ENCODE measurements at regions of chr17 and their contacts with region 1.

Region 1: DNA sequence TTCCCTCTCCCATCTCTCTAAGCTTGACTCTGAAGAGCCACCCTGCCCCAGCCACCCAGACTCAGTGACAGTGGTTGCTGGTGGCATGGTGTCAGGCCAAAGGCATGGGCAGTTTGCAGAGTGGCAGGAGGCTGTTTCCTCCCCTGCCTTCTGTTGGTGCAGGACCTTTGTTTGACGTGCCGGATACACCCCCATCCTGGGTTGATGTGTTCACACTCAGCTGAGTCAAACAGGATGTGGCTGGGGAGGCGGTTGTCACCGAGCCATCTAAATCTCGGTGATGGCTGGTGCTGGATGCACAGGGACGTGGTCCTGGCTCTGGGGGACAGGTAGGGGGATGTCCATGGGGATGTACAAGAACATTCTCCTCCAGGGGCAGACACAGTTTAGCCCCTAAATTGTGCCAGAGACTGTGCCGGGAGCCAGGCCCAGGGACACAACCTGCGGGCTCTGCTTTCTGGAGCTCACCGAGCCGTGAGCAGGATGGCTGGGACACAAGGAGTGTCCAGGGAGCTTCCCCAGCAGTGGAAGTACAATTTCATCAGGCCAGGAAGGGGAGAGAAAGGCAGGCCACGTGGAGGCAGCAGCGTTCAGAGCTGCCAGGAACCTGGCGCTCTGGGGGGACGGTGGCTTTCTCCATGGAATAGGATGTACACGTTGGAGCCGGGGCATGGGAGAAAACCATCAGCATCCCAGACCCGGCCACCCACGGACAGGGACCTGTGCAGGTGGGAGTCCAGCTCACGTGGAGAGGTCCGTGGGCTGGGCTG is 264.2 kb downstream of the SEC14L1 start:
- DNase-seq: no peak
- ATAC-seq: no peak
- H3K4me3 ChIP-seq: no peak overlapping the region
- H3K27ac ChIP-seq: no peak overlapping the region
- H3K4me1 ChIP-seq: peaks cover 0 to 37% of the 10 kb centered on the region in 2 experiments; a peak in 2 of 5 replicates
- H3K27me3 ChIP-seq: no peaks in the 10 kb centered on the region
- CTCF ChIP-seq: no peak
- EP300 ChIP-seq: no peak
- POLR2A ChIP-seq: no peak
- RAD21 ChIP-seq: no peak

Region 2: DNA sequence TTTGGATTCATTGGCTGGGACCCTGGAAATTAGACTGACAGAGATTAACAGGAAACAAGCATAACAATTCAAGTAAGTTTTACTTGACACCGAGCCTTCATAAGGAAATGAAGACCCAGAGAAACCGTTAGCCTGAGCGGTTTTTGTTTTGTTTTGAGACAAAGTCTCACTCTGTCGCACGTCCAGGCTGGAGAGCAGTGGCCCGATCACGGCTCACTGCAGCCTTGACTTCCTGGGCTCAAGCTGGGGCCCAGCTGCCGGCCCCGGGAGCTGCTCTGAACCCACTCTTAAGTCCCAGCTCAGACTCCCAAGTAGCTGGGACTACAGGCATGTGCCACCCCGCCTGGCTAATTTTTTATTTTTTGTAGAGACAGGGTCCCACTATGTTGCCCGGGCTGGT is 57.1 kb after region 1 on chr17:
- CTCF ChIA-PET with region 1: no interaction called
- POLR2A ChIA-PET with region 1: no interaction called
- in situ Hi-C with region 1: no loop called
- intact Hi-C with region 1: no loop called
- DNase-seq: no peak
- ATAC-seq: no peak
- H3K4me3 ChIP-seq: no peak overlapping the region
- H3K27ac ChIP-seq: no peak overlapping the region
- H3K4me1 ChIP-seq: peaks cover 25 to 56% of the 10 kb centered on the region in 2 experiments
- H3K27me3 ChIP-seq: no peaks in the 10 kb centered on the region
- CTCF ChIP-seq: no peak
- EP300 ChIP-seq: no peak
- POLR2A ChIP-seq: no peak
- RAD21 ChIP-seq: no peak

Region 3: DNA sequence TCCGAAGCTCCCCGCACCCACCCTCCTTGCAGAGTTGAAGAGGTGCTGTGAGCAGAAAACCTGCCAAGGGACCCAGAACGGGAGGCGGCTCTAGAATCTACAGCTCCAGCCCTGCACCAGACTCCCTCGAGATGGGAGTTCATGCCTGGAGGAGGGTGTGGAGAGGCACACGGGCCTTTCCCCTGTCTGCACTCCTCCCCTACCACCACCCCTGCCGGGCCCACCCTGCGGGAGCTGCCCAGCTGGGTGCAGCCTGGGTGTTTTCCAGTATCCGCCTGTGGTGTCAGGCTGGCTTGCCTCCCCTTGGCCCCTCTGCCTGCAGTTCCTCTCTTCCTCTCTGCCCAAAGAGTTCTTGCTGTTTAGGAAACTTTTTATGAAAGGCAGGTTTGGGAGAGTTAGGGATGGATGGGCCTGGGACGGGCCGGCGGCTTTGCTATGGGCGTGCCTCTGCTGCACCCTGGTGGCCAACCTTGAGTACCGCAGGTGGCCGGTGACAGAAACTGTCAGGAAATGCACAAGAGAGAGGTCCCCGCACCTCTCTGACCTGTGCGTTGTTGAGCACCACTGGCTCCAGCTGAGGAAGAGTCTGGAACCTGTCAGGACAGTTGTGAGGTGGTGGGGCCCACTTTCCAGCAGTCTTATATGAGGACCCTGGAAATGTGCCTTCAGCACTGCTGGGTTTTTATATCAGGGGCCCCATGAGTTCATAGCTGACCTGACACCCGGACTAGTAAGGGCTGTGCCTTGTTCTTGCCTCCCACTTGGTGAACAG is 89.9 kb after region 1 on chr17:
- CTCF ChIA-PET with region 1: no interaction called
- POLR2A ChIA-PET with region 1: no interaction called
- in situ Hi-C with region 1: no loop called
- intact Hi-C with region 1: loop called (anchors 1 kb)
- DNase-seq: peak; percentile 77 to 84 (median 83)
- ATAC-seq: peak; percentile 94
- H3K4me3 ChIP-seq: no peak overlapping the region
- H3K27ac ChIP-seq: no peak overlapping the region
- H3K4me1 ChIP-seq: peaks cover 0 to 10% of the 10 kb centered on the region in 2 experiments; a peak in 1 of 5 replicates
- H3K27me3 ChIP-seq: no peaks in the 10 kb centered on the region
- CTCF ChIP-seq: peak; percentile 91 to 96 (median 94)
- EP300 ChIP-seq: no peak
- POLR2A ChIP-seq: no peak
- RAD21 ChIP-seq: peak; percentile 96 to 99

Measured in K562 (cell line).